ENCODE measurements at regions of chr1 and their contacts with region 1.

Region 1: GRCh38 chr1:34597877-34598514 is 156.9 kb upstream of the GJB5 start:
- DNase-seq: peak; percentile 75
- ATAC-seq: peak; percentile 81
- H3K4me3 ChIP-seq: no peak overlapping the region
- H3K27ac ChIP-seq: no peak overlapping the region
- H3K4me1 ChIP-seq: no peaks in the 10 kb centered on the region
- H3K27me3 ChIP-seq: peaks cover 26% of the 10 kb centered on the region
- CTCF ChIP-seq: peak; percentile 90

Region 2: DNA sequence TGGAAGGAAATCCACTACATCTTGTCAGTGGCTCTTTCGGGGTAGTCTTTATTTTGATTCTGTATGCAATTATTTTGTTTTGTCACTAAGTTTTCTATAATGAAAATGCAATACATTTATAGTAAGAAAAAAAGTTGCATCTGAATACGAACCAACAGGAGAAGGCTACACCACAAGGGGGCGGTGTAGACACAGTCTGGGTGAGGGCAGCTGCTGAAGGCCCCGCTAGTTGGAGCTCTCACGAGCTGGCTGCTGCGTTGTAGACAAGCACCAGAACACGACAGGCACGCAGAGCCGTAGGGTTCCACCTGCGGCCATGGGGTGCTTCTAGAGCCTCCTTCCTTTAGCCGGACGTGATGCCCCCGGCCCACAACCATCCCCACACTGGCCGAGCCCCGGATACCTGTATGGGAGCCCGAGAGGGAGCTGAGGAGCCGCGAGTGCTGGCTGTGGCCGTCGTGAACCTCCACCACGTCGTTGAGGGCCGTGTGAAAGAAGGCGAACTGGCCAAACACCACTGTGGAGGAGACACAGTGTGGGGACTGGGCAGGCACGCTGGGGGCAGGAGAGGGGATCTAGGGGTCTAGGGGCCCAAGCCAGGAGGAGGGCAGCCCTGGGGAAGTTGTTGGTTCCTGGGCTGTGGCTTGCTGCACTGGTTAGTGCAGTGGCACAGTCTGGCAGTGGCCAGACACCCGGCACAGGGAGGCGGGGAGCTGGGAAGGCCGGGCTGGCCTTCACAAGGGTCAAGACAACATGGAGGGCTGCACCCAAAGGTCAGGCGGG is 964.8 kb before region 1 on chr1:
- CTCF ChIA-PET with region 1: no interaction called
- POLR2A ChIA-PET with region 1: no interaction called
- intact Hi-C with region 1: loop called (anchors 5 kb)
- DNase-seq: peak; percentile 88
- ATAC-seq: peak; percentile 94
- H3K4me3 ChIP-seq: no peak overlapping the region
- H3K27ac ChIP-seq: no peak overlapping the region
- H3K4me1 ChIP-seq: no peaks in the 10 kb centered on the region
- H3K27me3 ChIP-seq: peaks cover 28% of the 10 kb centered on the region; the same call in 1 of the 2 replicates
- CTCF ChIP-seq: peak; percentile 98

Region 3: DNA sequence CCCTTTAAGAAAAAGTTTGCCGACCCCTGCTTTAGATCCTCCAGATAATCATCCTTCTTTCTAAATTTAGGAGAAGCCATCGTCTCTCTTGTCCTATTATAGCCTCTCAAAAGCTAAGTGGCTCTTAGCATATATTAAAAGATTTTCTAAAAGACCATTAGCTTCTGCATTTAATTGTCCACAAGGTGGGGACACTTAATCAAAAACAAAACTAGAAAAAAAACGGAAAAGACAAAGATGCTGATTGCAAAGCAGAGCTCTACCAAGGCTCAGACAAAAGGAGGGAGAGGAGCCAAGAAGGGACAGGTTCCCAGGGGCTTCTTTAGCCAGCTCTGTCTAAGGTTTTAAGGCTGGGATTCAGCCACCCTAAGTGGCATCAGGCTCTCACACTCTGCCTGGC is 862.4 kb before region 1 on chr1:
- CTCF ChIA-PET with region 1: no interaction called
- POLR2A ChIA-PET with region 1: no interaction called
- intact Hi-C with region 1: loop called (anchors 10 kb)
- DNase-seq: peak; percentile 9
- ATAC-seq: no peak
- H3K4me3 ChIP-seq: no peak overlapping the region
- H3K27ac ChIP-seq: no peak overlapping the region
- H3K4me1 ChIP-seq: no peaks in the 10 kb centered on the region
- H3K27me3 ChIP-seq: peaks cover 65% of the 10 kb centered on the region
- CTCF ChIP-seq: peak; percentile 53

Region 4: DNA sequence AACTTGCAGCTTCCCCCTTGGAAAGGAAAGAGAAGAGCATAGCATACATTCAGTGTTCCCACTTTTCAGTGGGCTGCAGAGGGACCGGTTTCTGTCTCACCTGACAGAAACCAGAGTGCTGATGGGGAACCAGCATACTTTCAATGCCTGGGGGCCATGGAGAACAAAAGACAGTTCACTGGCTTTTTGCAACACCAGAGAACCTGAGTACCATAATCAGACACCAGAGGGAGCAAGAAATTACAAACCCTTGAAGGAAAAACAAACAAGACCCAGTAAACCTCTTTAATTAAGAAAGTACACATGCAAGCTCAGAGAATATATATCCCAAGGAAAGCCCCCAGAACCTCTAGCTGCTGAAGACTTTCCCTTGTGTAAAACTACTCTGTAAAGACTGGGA is 484.1 kb before region 1 on chr1:
- CTCF ChIA-PET with region 1: no interaction called
- POLR2A ChIA-PET with region 1: no interaction called
- intact Hi-C with region 1: loop called (anchors 10 kb)
- DNase-seq: peak; percentile 45
- ATAC-seq: no peak
- H3K4me3 ChIP-seq: no peak overlapping the region
- H3K27ac ChIP-seq: no peak overlapping the region
- H3K4me1 ChIP-seq: no peaks in the 10 kb centered on the region
- H3K27me3 ChIP-seq: no peaks in the 10 kb centered on the region
- CTCF ChIP-seq: peak; percentile 55; the same call in 1 of the 2 replicates

Region 5: DNA sequence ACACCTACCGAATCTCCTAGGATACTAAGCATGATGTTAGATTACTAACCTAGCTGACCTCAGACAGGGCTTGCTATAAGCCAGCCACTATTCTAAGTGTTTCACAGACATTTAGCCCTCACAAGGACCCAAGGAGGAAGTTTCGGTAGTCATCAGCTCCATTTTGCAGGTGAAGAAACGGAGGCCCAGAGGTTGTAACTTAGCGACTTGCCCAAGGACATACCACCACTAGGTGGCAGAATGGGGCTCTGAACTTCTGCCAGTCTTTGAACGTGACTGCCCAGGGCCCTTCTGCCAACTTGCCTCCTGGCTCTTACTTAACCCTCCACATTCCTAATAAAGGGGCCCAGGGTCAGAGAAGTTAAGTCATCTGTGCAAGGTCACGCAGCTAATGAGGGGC is 137.8 kb before region 1 on chr1:
- CTCF ChIA-PET with region 1: no interaction called
- POLR2A ChIA-PET with region 1: no interaction called
- intact Hi-C with region 1: loop called (anchors 5 kb)
- DNase-seq: peak; percentile 61
- ATAC-seq: no peak; the same call in 1 of the 2 replicates
- H3K4me3 ChIP-seq: no peak overlapping the region
- H3K27ac ChIP-seq: no peak overlapping the region
- H3K4me1 ChIP-seq: no peaks in the 10 kb centered on the region
- H3K27me3 ChIP-seq: 0 out of 2 replicates have a peak, but pooled peaks cover 9% of the 10 kb centered on the region
- CTCF ChIP-seq: peak; percentile 70

Measured in PC-3 (cell line).